CD4-positive, alpha-beta T cell (primary cell): ENCODE measurements at regions of chr2 and their contacts with region 1.

Region 1: GRCh38 chr2:63692002-63692606 is 103.3 kb downstream of the MDH1 start:
- DNase-seq: peak in 4 of 14 experiments; percentile 28 to 70 (median 60)
- ATAC-seq: peak; percentile 74
- H3K4me3 ChIP-seq: no peak overlapping the region
- H3K4me3 Mint-ChIP-seq: no peak overlapping the region
- H3K27ac ChIP-seq: no peak overlapping the region
- H3K27ac Mint-ChIP-seq: no peak overlapping the region
- H3K4me1 ChIP-seq: no peaks in the 10 kb centered on the region
- H3K4me1 Mint-ChIP-seq: no peaks in the 10 kb centered on the region
- H3K27me3 ChIP-seq: no peaks in the 10 kb centered on the region
- H3K27me3 Mint-ChIP-seq: no peaks in the 10 kb centered on the region
- CTCF ChIP-seq: peak; percentile 77

Region 2: GRCh38 chr2:63888490-63889402 is 196.6 kb after region 1 on chr2:
- CTCF ChIA-PET with region 1: no interaction called
- POLR2A ChIA-PET with region 1: no interaction called
- intact Hi-C with region 1: loop called in 1 of 2 experiments (anchors 1 kb)
- DNase-seq: peak in 12 of 14 experiments; percentile 2 to 65 (median 30)
- ATAC-seq: peak; percentile 83
- H3K4me3 ChIP-seq: no peak overlapping the region
- H3K4me3 Mint-ChIP-seq: no peak overlapping the region
- H3K27ac ChIP-seq: no peak overlapping the region
- H3K27ac Mint-ChIP-seq: peak overlapping the region; percentile 45
- H3K4me1 ChIP-seq: no peaks in the 10 kb centered on the region
- H3K4me1 Mint-ChIP-seq: peaks cover 6% of the 10 kb centered on the region
- H3K27me3 ChIP-seq: no peaks in the 10 kb centered on the region
- H3K27me3 Mint-ChIP-seq: no peaks in the 10 kb centered on the region
- CTCF ChIP-seq: peak; percentile 71

Region 3: DNA sequence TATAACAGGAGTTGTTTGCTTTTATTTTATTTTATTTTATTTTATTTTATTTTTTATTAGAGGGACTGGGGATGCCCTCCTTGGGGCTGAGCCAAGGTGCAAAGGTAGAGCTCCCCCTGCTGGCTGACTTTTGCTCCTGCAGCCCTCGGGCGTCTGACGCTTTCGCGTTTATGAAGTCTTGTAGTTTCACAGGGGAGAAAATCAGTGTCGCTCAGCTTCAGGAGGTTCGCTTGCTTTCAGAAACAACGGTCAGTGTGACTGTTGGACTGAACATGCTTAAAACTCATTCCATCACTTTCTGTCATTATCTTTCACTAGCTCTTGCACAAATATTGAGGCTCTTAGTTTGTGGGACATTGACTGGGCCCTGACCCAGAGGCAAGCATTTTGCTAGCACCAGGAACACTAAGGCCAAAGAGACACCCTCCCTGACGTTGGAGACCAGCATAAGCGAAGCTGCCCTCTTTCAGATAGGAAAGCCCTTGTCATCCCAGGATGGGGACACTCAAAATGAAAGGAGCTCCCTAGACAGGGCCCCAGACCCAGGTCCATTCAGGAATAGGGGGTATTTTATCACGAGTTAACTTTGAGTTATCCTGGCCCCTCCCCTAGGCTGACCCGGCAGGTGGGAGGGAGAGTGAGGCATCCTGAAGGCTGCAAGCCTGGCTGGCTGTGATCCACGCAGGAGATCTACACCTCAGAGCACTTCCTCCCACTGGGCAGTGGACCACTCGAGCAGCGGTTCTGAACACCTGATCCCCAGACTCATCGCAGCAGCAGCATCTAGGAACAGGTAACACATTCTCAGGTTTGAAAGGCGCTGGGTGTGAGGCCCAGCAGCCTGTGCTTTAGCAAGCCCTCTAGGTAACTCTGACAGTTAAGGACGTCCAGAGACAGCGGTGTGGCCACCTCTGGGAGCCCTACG is 796.2 kb after region 1 on chr2:
- CTCF ChIA-PET with region 1: no interaction called
- POLR2A ChIA-PET with region 1: no interaction called
- intact Hi-C with region 1: loop called in 1 of 2 experiments (anchors 5 kb)
- DNase-seq: peak; percentile 63 to 88 (median 76)
- ATAC-seq: peak; percentile 88
- H3K4me3 ChIP-seq: no peak overlapping the region
- H3K4me3 Mint-ChIP-seq: no peak overlapping the region
- H3K27ac ChIP-seq: no peak overlapping the region
- H3K27ac Mint-ChIP-seq: no peak overlapping the region
- H3K4me1 ChIP-seq: peaks cover 15% of the 10 kb centered on the region
- H3K4me1 Mint-ChIP-seq: peaks cover 11% of the 10 kb centered on the region
- H3K27me3 ChIP-seq: no peaks in the 10 kb centered on the region
- H3K27me3 Mint-ChIP-seq: peaks cover 5% of the 10 kb centered on the region
- CTCF ChIP-seq: peak; percentile 99